Activated CD4-positive, alpha-beta T cell treated with anti-CD3 and anti-CD28 coated beads for 36 hours (primary cell): ENCODE measurements at regions of chr1 and their contacts with region 1.

Region 1: DNA sequence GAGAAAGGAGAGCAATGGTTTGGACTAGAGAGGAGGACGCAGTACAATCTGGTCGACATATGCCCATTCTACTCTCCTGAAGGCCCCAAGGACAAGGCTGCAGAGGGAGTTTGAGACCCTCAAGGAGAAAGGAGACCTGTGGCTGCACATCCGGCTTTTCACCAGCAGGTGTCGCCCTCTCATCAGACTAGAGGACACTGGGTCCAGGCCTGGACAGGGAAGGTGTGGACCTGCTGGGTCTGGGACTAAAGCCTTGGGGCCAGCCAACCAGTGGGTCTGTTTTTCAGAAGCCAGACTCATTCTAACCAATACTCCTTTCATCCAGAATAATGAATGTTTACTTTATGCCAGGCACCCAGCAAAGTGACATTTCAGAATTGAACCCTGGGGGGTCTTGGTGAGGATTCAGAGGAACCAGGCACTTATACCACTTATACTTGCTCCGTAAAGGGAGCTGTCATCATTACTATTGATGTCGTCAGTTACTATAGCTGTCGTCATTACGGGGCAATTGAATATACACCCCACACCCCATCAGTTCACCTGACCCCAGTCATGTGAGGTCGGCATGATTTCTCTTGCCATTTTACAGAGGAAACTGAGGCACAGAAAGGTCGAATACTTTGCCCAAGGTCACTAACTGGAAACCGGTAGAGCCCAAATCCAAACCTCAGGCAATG is 5.1 kb downstream of the SRARP start:
- DNase-seq: peak; percentile 86
- ATAC-seq: peak; percentile 35
- H3K4me3 Mint-ChIP-seq: no peak overlapping the region
- H3K27ac Mint-ChIP-seq: no peak overlapping the region
- H3K4me1 Mint-ChIP-seq: peaks cover 10% of the 10 kb centered on the region
- H3K27me3 Mint-ChIP-seq: no peaks in the 10 kb centered on the region

Region 2: DNA sequence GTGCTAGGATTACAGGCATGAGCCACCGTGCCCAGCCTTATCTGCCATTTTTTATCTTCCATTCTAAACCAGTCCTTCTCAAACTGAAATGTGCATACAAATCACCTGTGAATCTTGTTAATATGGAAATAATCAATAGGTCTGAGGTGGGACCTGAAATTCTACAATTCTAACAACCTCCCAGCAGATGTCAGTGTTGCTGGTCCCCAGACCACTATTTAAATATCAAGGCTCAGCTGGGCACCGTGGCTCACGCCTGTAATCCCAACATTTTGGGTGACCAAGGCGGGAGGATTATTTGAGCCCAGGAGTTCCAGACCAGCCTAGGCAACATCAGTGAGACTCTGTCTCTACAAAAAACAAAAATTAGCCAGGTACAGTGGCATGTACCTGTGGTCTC is 205.8 kb before region 1 on chr1:
- CTCF ChIA-PET with region 1: interaction called, 4 read pairs
- POLR2A ChIA-PET with region 1: no interaction called
- intact Hi-C with region 1: loop called in 1 of 2 experiments (anchors 2 kb)
- DNase-seq: peak; percentile 41
- ATAC-seq: peak; percentile 42
- H3K4me3 Mint-ChIP-seq: no peak overlapping the region
- H3K27ac Mint-ChIP-seq: no peak overlapping the region
- H3K4me1 Mint-ChIP-seq: no peaks in the 10 kb centered on the region
- H3K27me3 Mint-ChIP-seq: no peaks in the 10 kb centered on the region

Region 3: GRCh38 chr1:15994590-15995351 is 14.4 kb before region 1 on chr1:
- CTCF ChIA-PET with region 1: interaction called, 14 read pairs
- POLR2A ChIA-PET with region 1: no interaction called
- intact Hi-C with region 1: no loop called
- DNase-seq: peak; percentile 77
- ATAC-seq: peak; percentile 92
- H3K4me3 Mint-ChIP-seq: no peak overlapping the region
- H3K27ac Mint-ChIP-seq: peak overlapping the region; percentile 19
- H3K4me1 Mint-ChIP-seq: no peaks in the 10 kb centered on the region
- H3K27me3 Mint-ChIP-seq: no peaks in the 10 kb centered on the region

Region 4: DNA sequence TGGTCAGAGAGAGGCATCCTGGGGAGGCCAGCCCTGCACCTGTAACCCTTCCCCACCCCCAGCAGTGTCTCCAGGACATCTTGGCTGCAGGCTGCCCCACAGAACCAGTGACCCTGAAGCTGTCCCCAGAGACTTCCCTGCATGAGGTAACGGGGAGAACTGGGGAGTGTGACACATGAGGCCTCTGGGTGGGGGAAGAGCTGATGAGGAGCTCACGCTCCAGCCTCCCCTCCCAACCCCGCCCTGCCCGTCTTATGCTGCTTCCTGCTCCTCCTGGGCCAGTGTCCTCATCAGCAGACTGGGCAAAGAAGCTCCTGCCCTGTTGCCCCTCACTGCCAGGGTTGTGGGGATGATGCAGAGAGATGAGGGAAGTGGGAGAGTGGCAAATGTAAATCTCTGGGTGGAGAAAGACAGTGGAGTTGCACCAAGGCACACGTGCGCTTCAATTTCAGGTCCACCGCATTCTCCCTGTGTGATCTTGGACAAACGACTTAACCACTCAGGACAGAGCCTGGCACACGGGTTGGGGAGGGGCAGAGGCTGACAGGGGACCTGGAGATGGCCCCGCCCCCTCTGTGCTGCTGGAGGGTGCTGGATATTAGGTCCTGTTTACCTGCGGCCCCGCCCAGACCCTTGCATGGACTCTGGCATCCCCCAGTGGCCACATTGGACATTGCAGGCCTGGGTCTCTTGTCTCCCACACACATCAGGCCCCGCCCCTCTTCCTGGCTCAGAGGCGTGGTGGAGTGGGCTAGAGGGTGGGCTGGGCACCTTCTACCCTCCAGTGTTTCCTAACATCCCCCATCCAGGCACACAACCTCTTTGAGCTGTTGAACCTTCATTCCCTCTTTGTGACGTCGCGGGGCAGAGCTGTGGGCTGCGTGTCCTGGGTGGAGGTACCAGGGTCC is 46.7 kb after region 1 on chr1:
- CTCF ChIA-PET with region 1: interaction called, 3 read pairs
- POLR2A ChIA-PET with region 1: no interaction called
- intact Hi-C with region 1: loop called (anchors 1 kb)
- DNase-seq: peak; percentile 94
- ATAC-seq: peak; percentile 99
- H3K4me3 Mint-ChIP-seq: no peak overlapping the region
- H3K27ac Mint-ChIP-seq: peak overlapping the region; percentile 42
- H3K4me1 Mint-ChIP-seq: peaks cover 6% of the 10 kb centered on the region
- H3K27me3 Mint-ChIP-seq: no peaks in the 10 kb centered on the region

Region 5: GRCh38 chr1:16187748-16188401 is 178.7 kb after region 1 on chr1:
- CTCF ChIA-PET with region 1: interaction called, 3 read pairs
- POLR2A ChIA-PET with region 1: no interaction called
- intact Hi-C with region 1: loop called in 1 of 2 experiments (anchors 1 kb)
- DNase-seq: peak; percentile 86
- ATAC-seq: peak; percentile 94
- H3K4me3 Mint-ChIP-seq: no peak overlapping the region
- H3K27ac Mint-ChIP-seq: no peak overlapping the region
- H3K4me1 Mint-ChIP-seq: peaks cover 3% of the 10 kb centered on the region
- H3K27me3 Mint-ChIP-seq: peaks cover 6% of the 10 kb centered on the region